ENCODE measurements at regions of chr4 and their contacts with region 1.

Region 1: DNA sequence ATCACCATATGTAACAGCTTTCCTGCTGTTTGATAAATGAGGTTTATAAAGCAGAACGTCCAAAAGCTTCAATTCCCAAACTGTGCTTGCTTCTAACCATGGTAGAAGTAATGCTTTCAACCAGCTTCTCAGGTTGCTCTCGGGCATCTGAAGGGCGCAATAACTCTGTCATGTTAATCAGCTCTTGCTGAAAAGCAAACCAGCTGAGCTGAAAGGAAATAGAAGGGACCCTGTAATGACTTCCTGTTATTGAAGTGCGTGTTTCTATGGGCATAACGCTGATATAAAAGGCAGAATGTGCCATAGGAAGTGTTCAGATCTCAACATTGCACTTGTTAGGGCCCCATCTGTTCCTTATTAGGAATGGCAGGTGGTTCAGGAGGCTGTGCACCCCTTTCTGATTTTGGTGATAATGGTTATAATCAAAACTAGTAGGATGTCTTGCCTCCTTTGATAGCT is 21.2 kb downstream of the HERC3 start:
- DNase-seq: no peak
- H3K4me3 ChIP-seq: no peak overlapping the region
- CTCF ChIP-seq: no peak

Region 2: DNA sequence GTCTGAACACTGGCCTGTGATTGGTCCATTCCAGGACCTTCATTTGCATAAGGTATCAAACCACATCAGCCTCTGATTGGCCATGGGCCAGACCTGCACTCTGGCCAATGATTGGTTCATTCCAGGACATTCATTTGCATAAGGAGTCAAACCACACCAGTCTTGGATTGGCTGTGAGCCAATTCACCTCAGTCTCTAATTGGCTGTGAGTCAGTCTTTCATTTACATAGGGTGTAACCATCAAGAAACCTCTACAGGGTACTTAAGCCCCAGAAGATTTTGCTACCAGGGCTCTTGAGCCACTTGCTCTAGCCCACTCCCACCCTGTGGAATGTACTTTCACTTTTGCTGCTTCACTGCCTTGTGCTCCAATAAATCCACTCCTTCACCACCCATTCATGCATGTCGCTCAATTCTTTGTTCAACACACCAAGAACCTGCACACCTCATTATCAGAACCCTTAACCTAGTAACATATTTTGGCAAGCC is 170.7 kb before region 1 on chr4:
- CTCF ChIA-PET with region 1: no interaction called
- POLR2A ChIA-PET with region 1: no interaction called
- DNase-seq: no peak
- H3K4me3 ChIP-seq: no peak overlapping the region
- CTCF ChIP-seq: no peak

Region 3: DNA sequence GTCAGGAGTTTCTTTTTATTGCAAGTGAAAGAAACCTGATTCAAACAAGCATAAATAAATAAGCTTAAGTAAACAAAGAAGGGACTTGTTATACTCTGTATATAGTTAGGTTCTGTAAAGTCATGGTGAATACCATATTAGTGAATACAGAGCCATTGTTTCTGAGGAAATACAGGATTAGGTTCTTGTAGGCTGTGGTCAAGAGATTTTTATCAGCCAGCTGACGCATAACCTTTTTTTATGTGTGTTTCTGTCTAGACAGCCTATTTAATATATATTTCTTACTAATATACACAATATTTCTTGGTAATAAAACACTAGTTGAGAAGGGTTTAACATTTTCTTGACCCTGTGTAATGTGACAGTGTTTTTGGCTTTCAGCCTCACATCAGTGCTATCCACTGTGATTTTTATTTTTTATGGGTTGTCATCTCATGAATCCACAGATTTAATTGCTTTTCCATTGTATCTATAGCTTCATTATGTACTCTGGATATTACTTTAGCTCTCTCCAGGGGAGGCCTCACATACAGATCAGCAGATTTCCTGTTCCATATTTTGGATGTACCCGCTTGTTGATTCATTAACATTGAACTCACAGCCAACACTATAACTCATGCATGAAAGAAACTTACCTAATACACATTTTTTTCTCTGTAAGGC is 13.1 kb before region 1 on chr4:
- CTCF ChIA-PET with region 1: interaction called, 10 read pairs
- POLR2A ChIA-PET with region 1: interaction called, 10 read pairs
- DNase-seq: peak; percentile 89
- H3K4me3 ChIP-seq: no peak overlapping the region
- CTCF ChIP-seq: no peak

Region 4: GRCh38 chr4:88629826-88630225 is 16.4 kb after region 1 on chr4:
- CTCF ChIA-PET with region 1: interaction called, 3 read pairs
- POLR2A ChIA-PET with region 1: interaction called, 10 read pairs
- DNase-seq: no peak
- H3K4me3 ChIP-seq: no peak overlapping the region
- CTCF ChIP-seq: no peak